Vagina (tissue), 2 donors: ENCODE measurements at regions of chr16 and their contacts with region 1.

Region 1: GRCh38 chr16:4506450-4506849 is 30.3 kb downstream of the HMOX2 start:
- DNase-seq: no peak
- H3K4me3 ChIP-seq: no peak overlapping the region
- H3K27ac ChIP-seq: peak overlapping the region; percentile 60
- H3K4me1 ChIP-seq: peaks cover 34% of the 10 kb centered on the region
- H3K27me3 ChIP-seq: no peaks in the 10 kb centered on the region
- CTCF ChIP-seq: peak; percentile 36 to 71 (median 71)
- POLR2A ChIP-seq: no peak

Region 2: GRCh38 chr16:4556112-4556511 is 49.7 kb after region 1 on chr16 and contains the start of gene C16orf96:
- intact Hi-C with region 1: loop called (anchors 10 kb)
- DNase-seq: no peak
- H3K4me3 ChIP-seq: no peak within 1 kb of the TSS
- H3K27ac ChIP-seq: no peak within 1 kb of the TSS
- H3K4me1 ChIP-seq: no peaks in the 10 kb centered on the region
- H3K27me3 ChIP-seq: no peaks in the 10 kb centered on the region
- CTCF ChIP-seq: no peak
- POLR2A ChIP-seq: no peak
- total RNA-seq, gene C16orf96: not detected